A673 (cell line): ENCODE measurements at regions of chr19 and their contacts with region 1.

Region 1: GRCh38 chr19:2578901-2579677 is 103.2 kb downstream of the GADD45B start:
- DNase-seq: peak; percentile 87
- H3K4me3 ChIP-seq: peak overlapping the region; percentile 49
- H3K27ac ChIP-seq: no peak overlapping the region
- H3K4me1 ChIP-seq: peaks cover 14% of the 10 kb centered on the region
- H3K27me3 ChIP-seq: no peaks in the 10 kb centered on the region
- CTCF ChIP-seq: peak; percentile 88

Region 2: DNA sequence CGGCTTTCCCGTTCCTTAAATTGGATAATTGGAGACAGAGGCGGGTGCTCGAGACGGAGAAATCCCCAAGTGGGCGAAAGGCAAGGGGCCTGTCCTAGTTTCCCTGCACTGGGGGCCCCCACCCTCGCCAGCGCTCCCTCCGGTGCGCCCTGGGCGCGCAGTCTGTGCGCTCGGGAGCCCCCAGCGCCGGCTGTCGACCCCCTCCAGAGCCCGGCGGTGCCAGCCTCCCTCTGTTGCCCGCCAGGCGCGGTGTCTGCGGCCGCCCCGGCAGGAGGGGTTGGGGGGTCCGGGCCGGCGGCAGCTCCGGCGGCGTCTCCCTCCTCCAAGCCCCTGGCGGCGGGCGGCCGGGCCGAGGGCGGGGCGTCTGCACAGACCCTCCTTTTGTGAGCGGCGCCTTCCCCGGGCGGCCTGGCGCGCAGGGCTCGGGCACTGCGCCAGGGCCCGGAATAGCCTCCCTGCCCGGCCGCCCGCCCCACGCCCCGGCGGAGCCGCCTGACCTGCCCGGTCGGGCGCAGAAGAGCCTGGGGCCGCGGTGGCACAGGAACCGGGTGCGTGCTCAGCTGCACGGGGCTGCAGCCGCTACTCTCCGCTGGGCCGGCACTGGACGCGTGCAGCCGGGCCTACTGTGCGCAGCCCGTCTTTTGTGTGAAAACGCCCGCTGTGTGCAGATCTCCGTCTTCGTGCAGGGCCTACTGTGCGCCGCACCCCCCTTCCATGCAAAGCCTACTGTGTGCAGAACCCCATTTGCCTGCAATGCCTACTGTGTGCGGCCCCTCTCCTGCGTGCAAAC is 90.0 kb before region 1 on chr19:
- CTCF ChIA-PET with region 1: interaction called, 11 read pairs
- POLR2A ChIA-PET with region 1: no interaction called
- intact Hi-C with region 1: no loop called
- DNase-seq: peak; percentile 62
- H3K4me3 ChIP-seq: peak overlapping the region; percentile 45
- H3K27ac ChIP-seq: no peak overlapping the region
- H3K4me1 ChIP-seq: peaks cover 2% of the 10 kb centered on the region
- H3K27me3 ChIP-seq: peaks cover 5% of the 10 kb centered on the region
- CTCF ChIP-seq: no peak

Region 3: DNA sequence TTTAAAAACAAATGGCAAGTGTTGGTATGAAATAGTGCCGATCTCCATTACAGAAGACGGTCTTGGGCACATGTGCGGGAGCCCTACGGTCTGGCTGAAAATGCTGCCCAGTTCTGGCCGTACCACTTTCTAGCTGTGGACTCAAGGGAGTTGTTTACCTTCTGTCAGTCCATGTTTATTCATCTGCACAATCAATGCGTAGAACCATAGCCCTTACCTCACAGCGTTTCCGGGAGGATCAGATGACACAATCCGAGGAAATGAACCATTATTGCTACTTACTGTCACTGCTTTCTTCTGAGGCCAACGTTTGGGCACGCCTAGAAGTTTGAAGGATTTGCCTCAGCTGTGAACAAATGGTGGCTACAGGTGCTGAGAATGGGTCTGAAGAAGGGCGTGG is 72.0 kb before region 1 on chr19:
- CTCF ChIA-PET with region 1: no interaction called
- POLR2A ChIA-PET with region 1: no interaction called
- intact Hi-C with region 1: no loop called
- DNase-seq: peak; percentile 94
- H3K4me3 ChIP-seq: no peak overlapping the region
- H3K27ac ChIP-seq: peak overlapping the region; percentile 83
- H3K4me1 ChIP-seq: peaks cover 10% of the 10 kb centered on the region
- H3K27me3 ChIP-seq: no peaks in the 10 kb centered on the region
- CTCF ChIP-seq: no peak

Region 4: DNA sequence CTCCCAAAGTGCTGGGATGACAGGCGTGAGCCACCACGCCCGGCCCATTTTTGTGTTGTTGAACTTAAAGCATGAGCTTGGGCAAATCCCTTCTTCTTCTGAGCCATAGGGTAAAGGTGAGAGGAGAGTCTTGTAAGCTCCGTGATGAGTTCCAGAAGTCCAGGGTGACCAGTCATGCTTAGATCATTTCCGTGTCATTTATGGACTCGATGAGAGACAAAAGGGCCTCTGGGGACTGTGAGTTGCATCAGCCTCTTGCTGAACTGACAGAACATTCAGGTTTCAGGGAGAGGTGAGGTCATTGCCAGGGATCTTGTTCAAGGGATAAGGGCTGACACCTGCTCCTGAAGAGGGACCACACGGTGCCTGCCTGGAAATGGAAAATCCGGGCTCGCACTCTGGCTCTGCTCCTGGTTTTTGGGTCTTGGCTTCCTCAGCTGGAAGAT is 49.6 kb before region 1 on chr19:
- CTCF ChIA-PET with region 1: no interaction called
- POLR2A ChIA-PET with region 1: no interaction called
- intact Hi-C with region 1: no loop called
- DNase-seq: no peak
- H3K4me3 ChIP-seq: no peak overlapping the region
- H3K27ac ChIP-seq: no peak overlapping the region
- H3K4me1 ChIP-seq: peaks cover 8% of the 10 kb centered on the region
- H3K27me3 ChIP-seq: no peaks in the 10 kb centered on the region
- CTCF ChIP-seq: no peak